Calu3 (cell line): ENCODE measurements at regions of chr14 and their contacts with region 1.

Region 1: DNA sequence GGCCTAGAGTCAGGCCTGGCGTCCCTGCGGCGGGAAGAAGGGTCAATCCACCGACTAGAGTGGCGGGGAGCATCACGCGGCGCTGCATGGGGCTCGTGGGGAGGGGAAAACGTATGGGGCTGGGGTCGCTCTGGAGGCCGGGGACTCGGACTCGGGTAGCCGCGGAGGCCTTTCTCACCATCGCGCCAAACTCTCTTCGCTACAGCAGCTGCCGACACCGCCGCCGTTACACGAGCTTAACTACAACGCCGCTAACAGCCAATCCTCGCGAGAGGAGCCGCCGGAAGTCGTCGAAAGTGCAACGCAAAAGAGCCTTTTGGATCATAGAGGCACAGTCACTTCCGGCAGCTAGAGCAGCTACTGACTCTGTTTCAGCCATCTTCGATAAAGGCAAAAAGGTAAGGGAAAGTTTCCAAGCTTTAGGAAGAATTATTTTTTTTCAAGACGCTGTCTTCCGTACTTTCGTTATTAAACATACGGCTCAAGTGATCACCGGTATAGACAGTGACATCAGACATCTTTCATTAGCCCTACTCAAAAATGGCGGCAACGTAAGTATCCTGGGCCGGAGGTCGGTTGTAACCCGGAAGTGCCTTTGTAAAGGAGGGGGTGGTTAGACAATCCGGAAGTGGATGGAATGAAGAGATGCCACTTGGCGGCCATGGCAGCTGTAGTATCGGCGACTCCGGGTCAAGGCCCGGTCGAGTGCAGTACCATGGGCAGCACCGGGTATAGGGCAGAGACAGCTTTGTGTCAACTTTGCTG is at the starts of genes ERH and SLC39A9:
- DNase-seq: peak; percentile 87
- H3K4me3 Mint-ChIP-seq: peak within 1 kb of the TSS; percentile 74
- H3K27ac Mint-ChIP-seq: peak within 1 kb of the TSS; percentile 98
- H3K4me1 Mint-ChIP-seq: peaks cover 22% of the 10 kb centered on the region
- H3K27me3 Mint-ChIP-seq: no peaks in the 10 kb centered on the region
- CTCF ChIP-seq: no peak
- total RNA-seq, gene ERH: 313 and 343 TPM in 2 replicates
- total RNA-seq, gene SLC39A9: 88.3 and 94.7 TPM in 2 replicates

Region 2: GRCh38 chr14:69247676-69248440 is 150.4 kb before region 1 on chr14:
- CTCF ChIA-PET with region 1: no interaction called
- intact Hi-C with region 1: loop called (anchors 5 kb)
- DNase-seq: no peak
- H3K4me3 Mint-ChIP-seq: no peak overlapping the region
- H3K27ac Mint-ChIP-seq: no peak overlapping the region
- H3K4me1 Mint-ChIP-seq: no peaks in the 10 kb centered on the region
- H3K27me3 Mint-ChIP-seq: no peaks in the 10 kb centered on the region
- CTCF ChIP-seq: peak; percentile 17

Region 3: DNA sequence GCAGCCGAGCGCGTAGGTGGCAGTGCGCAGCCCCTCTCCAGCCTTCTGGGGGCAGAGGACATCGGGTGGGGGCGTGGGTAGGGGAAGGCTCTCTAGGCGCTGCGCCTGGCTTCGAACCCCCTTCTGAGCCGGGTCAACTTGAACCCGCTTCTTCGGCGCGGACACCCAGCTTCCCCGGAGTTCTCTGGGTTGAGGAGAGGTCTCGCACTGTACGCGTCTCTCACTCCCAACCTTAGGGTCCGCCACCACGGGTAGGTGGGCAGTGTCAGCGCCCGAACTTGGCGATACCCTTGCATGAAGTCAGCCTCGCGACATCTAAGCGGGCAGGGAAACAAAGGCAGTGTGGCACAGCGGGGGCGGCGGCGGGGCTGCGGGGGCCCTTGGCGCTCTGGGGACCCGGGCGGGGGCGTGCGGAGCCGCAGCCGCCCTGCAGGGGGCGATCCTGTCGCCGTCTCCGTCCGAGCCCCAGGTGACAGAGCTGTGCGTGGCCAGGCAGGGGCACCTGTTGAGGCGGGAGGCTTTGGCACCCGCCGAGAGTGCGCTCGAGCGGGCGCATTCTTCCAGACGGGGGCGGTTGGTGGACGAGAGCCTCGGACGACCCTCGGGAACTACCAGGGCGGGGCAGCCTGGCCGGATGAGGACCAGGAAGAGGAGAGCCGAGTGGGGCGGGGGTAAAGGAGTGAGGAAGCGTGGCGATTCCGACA is 137.2 kb before region 1 on chr14:
- CTCF ChIA-PET with region 1: no interaction called
- intact Hi-C with region 1: loop called (anchors 5 kb)
- DNase-seq: peak; percentile 78
- H3K4me3 Mint-ChIP-seq: peak overlapping the region; percentile 77
- H3K27ac Mint-ChIP-seq: no peak overlapping the region
- H3K4me1 Mint-ChIP-seq: no peaks in the 10 kb centered on the region
- H3K27me3 Mint-ChIP-seq: peaks cover 75% of the 10 kb centered on the region
- CTCF ChIP-seq: peak; percentile 81

Region 4: DNA sequence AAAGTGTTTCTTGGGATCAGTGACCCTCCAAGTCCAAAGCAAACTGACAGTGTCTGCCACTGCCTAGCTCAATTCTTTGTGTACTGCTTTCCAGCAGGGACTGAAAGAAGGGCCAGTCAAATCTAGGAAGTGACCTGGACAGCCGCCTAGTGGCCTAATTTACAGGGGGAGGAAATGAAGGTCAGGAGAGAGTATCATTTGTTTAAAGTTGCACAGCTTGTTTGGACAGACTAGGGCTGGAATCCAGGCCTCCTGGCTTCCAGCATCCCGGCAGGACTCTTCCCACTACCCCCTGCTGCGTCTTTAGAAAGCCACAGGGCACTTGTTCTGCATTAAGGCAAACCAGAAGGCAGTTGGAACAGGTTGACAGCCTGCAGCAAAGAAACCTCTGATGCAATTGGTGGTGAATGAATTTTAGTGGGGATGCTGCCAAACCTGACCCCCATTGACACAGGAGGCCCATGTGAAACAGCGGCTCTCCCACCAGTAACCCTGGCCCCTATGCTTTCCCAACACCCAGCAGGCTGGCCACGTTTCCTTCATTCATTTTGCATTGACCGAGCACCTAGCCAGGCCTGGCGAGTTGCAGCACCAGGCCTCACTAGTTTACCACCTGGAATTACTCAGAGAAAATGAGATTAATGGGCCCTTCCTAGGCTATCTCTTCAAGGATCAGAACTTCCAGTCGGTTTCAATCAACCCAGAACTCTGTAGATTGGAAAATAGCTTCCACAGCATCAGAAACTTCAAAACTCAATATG is 110.0 kb before region 1 on chr14:
- CTCF ChIA-PET with region 1: no interaction called
- intact Hi-C with region 1: no loop called
- DNase-seq: peak; percentile 10
- H3K4me3 Mint-ChIP-seq: no peak overlapping the region
- H3K27ac Mint-ChIP-seq: no peak overlapping the region
- H3K4me1 Mint-ChIP-seq: no peaks in the 10 kb centered on the region
- H3K27me3 Mint-ChIP-seq: peaks cover 13% of the 10 kb centered on the region
- CTCF ChIP-seq: no peak

Region 5: GRCh38 chr14:69451956-69452355 is 53.7 kb after region 1 on chr14:
- CTCF ChIA-PET with region 1: no interaction called
- intact Hi-C with region 1: loop called (anchors 2 kb)
- DNase-seq: no peak
- H3K4me3 Mint-ChIP-seq: no peak overlapping the region
- H3K27ac Mint-ChIP-seq: peak overlapping the region; percentile 62
- H3K4me1 Mint-ChIP-seq: no peaks in the 10 kb centered on the region
- H3K27me3 Mint-ChIP-seq: no peaks in the 10 kb centered on the region
- CTCF ChIP-seq: no peak

Region 6: GRCh38 chr14:69580009-69580577 is 181.9 kb after region 1 on chr14:
- CTCF ChIA-PET with region 1: no interaction called
- intact Hi-C with region 1: no loop called
- DNase-seq: peak; percentile 66
- H3K4me3 Mint-ChIP-seq: no peak overlapping the region
- H3K27ac Mint-ChIP-seq: no peak overlapping the region
- H3K4me1 Mint-ChIP-seq: peaks cover 8% of the 10 kb centered on the region
- H3K27me3 Mint-ChIP-seq: peaks cover 19% of the 10 kb centered on the region
- CTCF ChIP-seq: peak; percentile 38

Region 7: DNA sequence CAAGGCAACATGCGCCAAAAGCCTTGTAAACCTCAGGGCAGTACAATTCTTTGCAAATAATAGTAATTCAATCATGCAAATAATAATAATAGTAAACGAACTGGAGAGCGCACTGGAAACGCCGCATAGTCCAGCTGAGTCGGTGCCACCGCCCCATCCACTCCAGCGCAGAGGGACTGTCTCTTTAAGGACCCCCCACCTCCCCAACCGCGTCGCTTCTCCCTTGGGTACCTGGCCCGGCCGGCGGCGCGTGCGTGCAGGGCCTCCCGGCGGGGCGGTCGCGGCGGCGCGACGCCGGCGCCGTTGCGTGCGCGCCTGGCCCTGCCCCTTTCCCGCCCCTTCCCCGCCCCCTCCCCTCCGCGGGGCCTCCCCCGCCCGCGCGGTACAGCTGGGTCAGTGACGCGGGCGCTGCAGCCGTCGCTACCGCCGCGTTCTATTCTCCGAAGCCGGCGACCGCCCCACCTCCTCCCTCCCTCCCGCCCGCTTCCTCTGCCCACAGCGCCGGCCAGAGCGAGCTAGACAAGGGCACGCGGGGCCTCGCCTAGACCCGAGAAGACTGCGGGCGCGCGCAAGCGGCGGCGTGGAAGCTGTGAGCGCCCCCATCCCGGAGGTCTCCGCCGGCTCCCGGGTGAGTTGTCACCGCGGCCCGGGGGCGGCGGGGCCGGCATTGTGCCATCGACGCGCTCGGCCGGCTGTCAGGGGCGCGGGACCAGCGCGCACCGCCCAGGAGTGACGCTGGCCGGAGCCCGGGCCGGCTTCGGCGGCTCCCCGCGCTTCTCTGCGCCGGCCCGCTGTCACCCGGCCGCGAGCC is 213.2 kb after region 1 on chr14 and contains the start of gene SUSD6:
- CTCF ChIA-PET with region 1: no interaction called
- intact Hi-C with region 1: no loop called
- DNase-seq: peak; percentile 85
- H3K4me3 Mint-ChIP-seq: peak within 1 kb of the TSS; percentile 96
- H3K27ac Mint-ChIP-seq: peak within 1 kb of the TSS; percentile 94
- H3K4me1 Mint-ChIP-seq: peaks cover 48% of the 10 kb centered on the region
- H3K27me3 Mint-ChIP-seq: no peaks in the 10 kb centered on the region
- CTCF ChIP-seq: no peak
- total RNA-seq, gene SUSD6: 44.7 and 45.5 TPM in 2 replicates